ENCODE measurements at regions of chr6 and their contacts with region 1.

Region 1: DNA sequence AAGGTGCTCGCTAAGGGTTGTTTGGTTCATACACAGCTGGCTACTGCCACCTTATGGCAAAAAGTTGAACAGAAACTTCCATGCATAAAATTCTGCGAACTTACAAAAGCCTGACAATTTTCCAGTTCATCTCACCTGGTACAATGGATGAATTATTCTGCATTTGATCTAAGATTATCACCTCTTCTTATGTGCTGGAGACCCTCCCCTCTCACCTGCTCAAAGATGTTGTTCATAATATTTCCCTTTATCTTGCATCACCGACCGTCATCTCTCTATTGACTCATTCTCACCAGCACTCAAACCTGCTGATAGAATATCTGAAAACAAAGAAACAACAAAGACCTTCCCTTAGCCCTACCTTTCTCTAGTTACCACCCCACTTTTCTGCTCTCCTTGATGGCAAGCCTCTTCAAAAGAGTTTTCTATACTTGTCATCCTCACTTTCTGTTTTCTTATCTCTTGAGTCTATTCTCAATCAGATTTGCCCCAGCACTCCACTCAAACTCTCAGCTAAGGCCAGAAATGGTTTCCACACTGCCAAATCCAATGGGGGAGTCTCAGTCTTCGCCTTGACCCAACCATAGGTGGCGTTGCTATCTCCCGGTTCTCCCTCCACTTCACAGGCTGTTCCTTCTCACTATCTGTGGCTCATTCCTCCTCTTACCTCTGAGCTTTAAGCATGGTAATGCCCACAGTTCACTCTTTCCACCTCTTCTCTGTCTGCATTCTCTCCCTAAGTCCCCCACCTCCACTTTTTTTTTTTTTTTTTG is 25.8 kb downstream of the SNRNP48 start:
- DNase-seq: peak in 6 of 7 donors; percentile 29 to 72 (median 52)
- H3K4me3 ChIP-seq: no peak overlapping the region
- H3K27ac ChIP-seq: no peak overlapping the region
- H3K4me1 ChIP-seq: peaks cover 0 to 12% of the 10 kb centered on the region in 2 donors
- H3K27me3 ChIP-seq: no peaks in the 10 kb centered on the region
- CTCF ChIP-seq: peak; percentile 70 to 86 (median 80)
- POLR2A ChIP-seq: no peak

Region 2: DNA sequence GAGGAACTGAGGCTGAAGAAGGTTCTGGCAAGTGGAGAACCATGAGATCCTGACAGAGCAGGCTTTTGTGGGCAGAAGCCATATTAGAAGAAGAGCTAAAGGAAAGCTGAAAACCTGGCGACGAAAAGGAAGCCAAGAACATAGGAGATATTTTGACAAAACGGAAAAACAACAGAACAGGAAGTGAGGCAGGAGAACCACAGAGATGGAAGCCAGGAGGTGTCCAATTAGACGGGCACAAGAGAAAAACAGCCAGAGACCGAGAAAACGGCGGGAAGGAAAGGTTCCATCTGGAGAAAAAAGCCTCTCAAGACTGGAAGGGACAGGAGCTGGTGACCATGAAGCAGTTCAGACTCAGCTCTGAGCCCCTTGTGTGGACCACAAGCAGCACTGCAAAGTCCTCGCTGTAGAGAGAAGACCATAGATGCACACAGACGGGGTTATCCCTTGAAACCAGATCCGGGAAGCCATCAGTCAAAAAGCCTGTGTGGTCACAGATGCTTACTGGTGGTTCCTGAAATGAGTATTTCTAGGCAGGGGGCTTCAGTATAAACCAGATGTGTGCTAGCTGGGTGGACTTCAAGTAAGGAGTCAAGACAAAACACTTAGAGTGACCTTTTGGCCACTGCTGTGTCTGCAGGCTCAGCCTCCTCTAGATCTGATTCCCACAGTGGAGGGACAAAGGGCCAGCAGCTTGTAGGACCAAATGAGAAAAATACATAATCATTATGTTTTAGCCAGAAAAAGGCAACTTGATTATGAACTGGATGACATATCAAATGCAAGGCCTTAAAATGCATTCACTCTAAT is 333.5 kb before region 1 on chr6:
- intact Hi-C with region 1: loop called (anchors 5 to 10 kb)
- DNase-seq: no peak
- H3K4me3 ChIP-seq: no peak overlapping the region
- H3K27ac ChIP-seq: no peak overlapping the region
- H3K4me1 ChIP-seq: no peaks in the 10 kb centered on the region
- H3K27me3 ChIP-seq: no peaks in the 10 kb centered on the region
- CTCF ChIP-seq: no peak
- POLR2A ChIP-seq: no peak

Region 3: DNA sequence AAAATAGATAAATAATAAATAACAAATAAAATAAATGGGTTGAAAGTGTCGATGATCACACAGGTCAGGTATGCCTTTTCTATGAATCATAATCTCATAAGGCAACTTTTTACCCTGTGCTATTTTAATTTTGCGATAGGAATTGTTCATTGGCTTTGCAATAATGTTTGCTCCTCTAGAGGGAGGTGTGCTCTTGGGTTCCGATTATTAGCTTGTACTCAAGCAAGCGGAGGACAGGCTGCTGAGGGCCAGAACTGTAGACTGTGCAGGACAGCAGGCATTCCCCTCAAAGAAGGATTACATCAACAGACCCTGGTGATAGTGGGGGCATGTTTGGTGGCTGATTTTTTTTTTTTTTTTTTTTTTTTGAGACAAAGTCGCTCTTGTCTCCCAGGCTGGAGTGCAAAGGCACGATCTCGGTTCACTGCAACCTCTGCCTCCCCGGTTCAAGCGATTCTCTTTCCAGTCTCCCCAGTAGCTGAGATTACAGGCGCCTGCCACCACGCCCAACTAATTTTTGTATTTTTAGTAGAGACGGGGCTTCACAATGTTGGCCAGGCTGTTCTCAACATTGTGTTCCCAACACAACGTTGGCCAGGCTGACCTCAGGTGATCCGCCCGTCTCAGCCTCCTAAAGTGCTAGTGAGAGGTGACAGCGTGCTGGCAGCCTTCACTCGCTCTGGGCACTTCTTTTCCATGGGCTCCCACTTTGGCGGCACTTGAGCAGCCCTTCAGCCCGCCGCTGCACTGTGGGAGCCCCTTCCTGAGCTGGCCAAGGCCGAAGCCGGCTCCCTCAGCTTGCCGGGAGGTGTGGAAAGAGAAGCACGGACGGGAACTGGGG is 190.6 kb before region 1 on chr6:
- intact Hi-C with region 1: loop called (anchors 10 kb)
- DNase-seq: peak in 5 of 7 donors; percentile 46 to 70 (median 52)
- H3K4me3 ChIP-seq: no peak overlapping the region
- H3K27ac ChIP-seq: no peak overlapping the region
- H3K4me1 ChIP-seq: no peaks in the 10 kb centered on the region
- H3K27me3 ChIP-seq: no peaks in the 10 kb centered on the region
- CTCF ChIP-seq: peak; percentile 59 to 76 (median 70)
- POLR2A ChIP-seq: no peak